CD8-positive, alpha-beta T cell (primary cell): ENCODE measurements at regions of chr7 and their contacts with region 1.

Region 1: DNA sequence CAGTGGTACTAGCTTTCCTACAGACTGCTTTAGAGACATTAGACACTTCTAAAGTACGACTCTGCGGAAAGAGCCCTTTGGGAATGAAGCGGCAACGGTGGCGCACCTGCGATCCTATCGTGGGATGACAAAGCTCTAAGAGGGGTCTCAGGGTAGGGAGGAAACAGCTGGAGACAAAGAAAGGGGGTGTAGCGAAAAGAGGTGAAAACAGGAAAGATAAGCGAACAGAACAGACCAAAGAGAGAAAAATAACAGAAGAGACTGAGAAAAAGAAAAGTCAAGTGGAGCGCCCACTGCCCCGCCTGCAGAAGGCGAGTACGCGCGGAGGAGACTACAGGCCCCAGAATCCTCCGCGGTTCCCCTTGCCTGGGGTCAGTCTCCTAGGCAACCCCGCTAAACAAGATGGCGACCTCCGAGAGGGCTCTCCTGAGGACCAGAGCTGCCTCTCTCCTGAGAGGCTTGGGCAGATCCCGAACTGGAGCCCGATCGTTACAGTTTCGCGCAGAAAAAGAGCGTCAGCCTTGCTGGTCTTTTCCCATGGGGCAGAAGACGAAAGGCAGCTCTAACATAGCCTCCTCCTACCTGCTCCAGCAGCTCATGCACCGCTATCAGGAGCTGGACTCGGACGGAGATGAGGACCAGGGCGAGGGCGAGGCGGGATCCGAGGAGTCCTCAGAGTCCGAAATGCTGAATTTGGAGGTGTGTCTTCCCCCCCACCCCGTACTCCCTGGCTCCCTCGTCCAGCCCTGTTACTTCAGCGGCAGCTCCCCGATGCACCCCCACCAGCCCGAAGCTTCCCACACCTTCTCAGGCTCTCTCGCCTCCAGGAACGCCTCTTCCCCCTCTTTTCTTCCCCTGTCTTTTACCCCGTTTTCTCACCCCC is at the start of gene LRGUK:
- DNase-seq: peak; percentile 59 to 88 (median 79)
- ATAC-seq: peak; percentile 100
- H3K4me3 ChIP-seq: peak within 1 kb of the TSS; percentile 61 to 76
- H3K4me3 Mint-ChIP-seq: peak within 1 kb of the TSS; percentile 85
- H3K27ac ChIP-seq: no peak within 1 kb of the TSS
- H3K27ac Mint-ChIP-seq: no peak within 1 kb of the TSS
- H3K4me1 ChIP-seq: peaks cover 10% of the 10 kb centered on the region
- H3K4me1 Mint-ChIP-seq: peaks cover 15% of the 10 kb centered on the region
- H3K27me3 ChIP-seq: peaks cover 0 to 4% of the 10 kb centered on the region in 2 experiments
- H3K27me3 Mint-ChIP-seq: peaks cover 18% of the 10 kb centered on the region
- CTCF ChIP-seq: no peak
- total RNA-seq, gene LRGUK: 0.42 to 0.71 TPM

Region 2: GRCh38 chr7:133081599-133082389 is 1045.4 kb before region 1 on chr7 and contains the start of gene CHCHD3:
- CTCF ChIA-PET with region 1: no interaction called
- POLR2A ChIA-PET with region 1: no interaction called
- intact Hi-C with region 1: loop called in 1 of 2 experiments (anchors 1 kb)
- DNase-seq: peak; percentile 88 to 98 (median 96)
- ATAC-seq: peak; percentile 98
- H3K4me3 ChIP-seq: peak within 1 kb of the TSS; percentile 94 to 96
- H3K4me3 Mint-ChIP-seq: peak within 1 kb of the TSS; percentile 92
- H3K27ac ChIP-seq: peak within 1 kb of the TSS; percentile 92 to 94
- H3K27ac Mint-ChIP-seq: peak within 1 kb of the TSS; percentile 96
- H3K4me1 ChIP-seq: peaks cover 16% of the 10 kb centered on the region
- H3K4me1 Mint-ChIP-seq: peaks cover 33% of the 10 kb centered on the region
- H3K27me3 ChIP-seq: no peaks in the 10 kb centered on the region
- H3K27me3 Mint-ChIP-seq: peaks cover 3% of the 10 kb centered on the region
- CTCF ChIP-seq: no peak
- total RNA-seq, gene CHCHD3: 19.0 to 20.4 TPM

Region 3: GRCh38 chr7:133252858-133253518 is 874.2 kb before region 1 on chr7 and contains the start of gene EXOC4:
- CTCF ChIA-PET with region 1: no interaction called
- POLR2A ChIA-PET with region 1: no interaction called
- intact Hi-C with region 1: loop called in 1 of 2 experiments (anchors 5 kb)
- DNase-seq: peak; percentile 82 to 98 (median 89)
- ATAC-seq: peak; percentile 99
- H3K4me3 ChIP-seq: peak within 1 kb of the TSS; percentile 88
- H3K4me3 Mint-ChIP-seq: peak within 1 kb of the TSS; percentile 96
- H3K27ac ChIP-seq: peak within 1 kb of the TSS; percentile 83 to 92
- H3K27ac Mint-ChIP-seq: peak within 1 kb of the TSS; percentile 96
- H3K4me1 ChIP-seq: peaks cover 15% of the 10 kb centered on the region
- H3K4me1 Mint-ChIP-seq: peaks cover 44% of the 10 kb centered on the region
- H3K27me3 ChIP-seq: no peaks in the 10 kb centered on the region
- H3K27me3 Mint-ChIP-seq: no peaks in the 10 kb centered on the region
- CTCF ChIP-seq: no peak
- total RNA-seq, gene EXOC4: 47.9 to 50.5 TPM

Region 4: GRCh38 chr7:133770863-133771492 is 356.2 kb before region 1 on chr7:
- CTCF ChIA-PET with region 1: no interaction called
- POLR2A ChIA-PET with region 1: no interaction called
- intact Hi-C with region 1: no loop called
- DNase-seq: no peak
- ATAC-seq: no peak
- H3K4me3 ChIP-seq: no peak overlapping the region
- H3K4me3 Mint-ChIP-seq: no peak overlapping the region
- H3K27ac ChIP-seq: no peak overlapping the region
- H3K27ac Mint-ChIP-seq: no peak overlapping the region
- H3K4me1 ChIP-seq: no peaks in the 10 kb centered on the region
- H3K4me1 Mint-ChIP-seq: no peaks in the 10 kb centered on the region
- H3K27me3 ChIP-seq: no peaks in the 10 kb centered on the region
- H3K27me3 Mint-ChIP-seq: no peaks in the 10 kb centered on the region
- CTCF ChIP-seq: no peak

Region 5: DNA sequence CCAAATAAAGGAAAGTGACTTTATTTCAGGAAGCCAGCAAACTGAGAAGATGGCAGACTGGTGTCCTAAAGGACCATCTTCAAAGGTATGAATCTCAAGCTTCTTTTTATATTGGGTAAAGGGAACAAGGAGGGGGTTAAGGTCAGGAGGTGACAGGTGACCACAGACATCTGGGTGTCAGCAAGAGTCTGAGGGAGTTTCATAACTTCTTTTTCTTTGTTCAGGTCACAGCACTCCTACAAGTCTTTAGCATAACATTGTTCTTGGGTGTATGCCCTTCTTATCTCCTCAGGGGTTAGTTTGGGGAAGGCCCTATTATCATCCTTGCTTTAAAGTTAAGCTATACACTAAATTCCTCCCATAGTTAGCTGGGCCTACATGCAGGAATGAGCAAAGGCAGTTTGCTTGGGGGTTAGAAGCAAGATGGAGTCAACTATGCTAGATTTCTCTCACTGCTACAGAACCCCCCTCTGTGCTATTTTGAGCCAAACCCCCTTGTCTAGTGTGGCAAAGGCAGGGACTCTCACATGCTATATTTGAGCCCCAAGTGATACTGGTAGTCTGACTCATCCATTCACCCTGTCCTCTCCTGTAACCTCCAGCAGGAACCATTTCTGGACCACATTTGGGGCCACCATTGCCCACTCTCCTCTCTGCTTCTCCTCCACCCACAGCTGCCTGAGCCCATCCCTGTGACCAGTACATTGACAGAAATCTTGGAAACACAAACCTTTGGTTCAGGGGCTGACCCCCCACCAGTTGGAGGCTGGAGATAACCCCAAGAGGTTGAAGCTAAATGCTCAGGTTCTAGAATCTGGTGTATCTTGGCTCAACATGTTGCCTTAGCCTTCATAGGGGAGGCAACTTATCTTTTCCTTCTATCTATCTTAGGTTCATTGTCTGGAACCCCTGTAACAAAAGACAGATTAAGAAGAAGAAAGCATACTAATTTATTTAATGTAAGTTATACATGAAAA is 55.6 kb before region 1 on chr7:
- CTCF ChIA-PET with region 1: no interaction called
- POLR2A ChIA-PET with region 1: no interaction called
- intact Hi-C with region 1: no loop called
- DNase-seq: no peak
- ATAC-seq: no peak
- H3K4me3 ChIP-seq: no peak overlapping the region
- H3K4me3 Mint-ChIP-seq: no peak overlapping the region
- H3K27ac ChIP-seq: no peak overlapping the region
- H3K27ac Mint-ChIP-seq: no peak overlapping the region
- H3K4me1 ChIP-seq: no peaks in the 10 kb centered on the region
- H3K4me1 Mint-ChIP-seq: no peaks in the 10 kb centered on the region
- H3K27me3 ChIP-seq: no peaks in the 10 kb centered on the region
- H3K27me3 Mint-ChIP-seq: no peaks in the 10 kb centered on the region
- CTCF ChIP-seq: no peak

Region 6: DNA sequence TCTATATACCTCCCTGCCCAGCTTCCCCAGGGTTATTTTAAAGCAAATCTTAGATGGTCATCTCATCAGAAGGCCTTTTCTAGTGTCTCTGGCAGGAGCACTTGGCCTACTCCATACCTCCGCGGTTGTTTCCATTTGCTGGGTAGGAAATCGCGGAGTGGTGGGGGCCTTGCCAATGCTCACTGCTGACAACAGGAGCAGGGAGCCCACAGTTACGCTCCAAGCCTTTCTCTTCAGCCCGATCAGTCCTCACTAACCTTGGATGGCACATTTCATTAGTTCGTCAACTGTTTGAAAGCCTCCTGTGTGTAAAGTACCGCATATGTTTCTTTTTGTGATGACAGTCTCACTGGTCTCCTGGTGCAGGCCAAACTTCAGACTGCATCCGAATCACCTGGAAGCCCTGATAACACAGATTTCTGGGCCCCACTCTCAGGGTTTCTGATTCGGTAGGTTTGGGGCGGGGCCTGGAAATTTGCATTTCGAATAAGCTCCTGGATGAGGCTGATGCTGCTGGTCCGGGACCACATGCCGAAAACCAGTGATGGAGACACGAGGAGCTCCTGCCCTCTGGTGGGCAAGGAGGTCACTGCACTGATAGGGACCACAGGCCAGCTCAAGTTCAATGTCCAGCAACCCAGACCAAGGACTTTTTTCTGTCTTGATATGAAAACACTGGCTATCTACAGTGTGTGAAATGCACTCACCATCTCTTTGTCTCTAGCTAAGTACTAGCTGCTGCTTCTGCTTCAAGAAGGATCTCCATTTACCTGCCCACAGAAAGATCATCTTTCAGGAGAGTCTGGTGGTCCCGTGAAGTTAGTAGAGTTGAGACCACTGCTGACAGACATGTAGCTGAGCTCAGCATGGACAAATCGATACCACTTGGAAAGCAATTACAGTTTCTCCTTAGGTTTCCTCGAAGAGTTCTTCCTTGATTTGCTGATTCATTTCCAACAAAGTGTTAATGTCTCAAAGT is 14.0 kb after region 1 on chr7:
- CTCF ChIA-PET with region 1: interaction called, 26 read pairs
- POLR2A ChIA-PET with region 1: interaction called, 3 read pairs
- intact Hi-C with region 1: no loop called
- DNase-seq: peak; percentile 6 to 57 (median 42)
- ATAC-seq: peak; percentile 69
- H3K4me3 ChIP-seq: no peak overlapping the region
- H3K4me3 Mint-ChIP-seq: no peak overlapping the region
- H3K27ac ChIP-seq: no peak overlapping the region
- H3K27ac Mint-ChIP-seq: no peak overlapping the region
- H3K4me1 ChIP-seq: no peaks in the 10 kb centered on the region
- H3K4me1 Mint-ChIP-seq: peaks cover 6% of the 10 kb centered on the region
- H3K27me3 ChIP-seq: no peaks in the 10 kb centered on the region
- H3K27me3 Mint-ChIP-seq: no peaks in the 10 kb centered on the region
- CTCF ChIP-seq: peak; percentile 68

Region 7: GRCh38 chr7:135558337-135558767 is 1431.1 kb after region 1 on chr7:
- CTCF ChIA-PET with region 1: no interaction called
- POLR2A ChIA-PET with region 1: no interaction called
- intact Hi-C with region 1: loop called in 1 of 2 experiments (anchors 5 kb)
- DNase-seq: peak; percentile 37 to 87 (median 68)
- ATAC-seq: peak; percentile 52
- H3K4me3 ChIP-seq: peak overlapping the region; percentile 85 to 86
- H3K4me3 Mint-ChIP-seq: no peak overlapping the region
- H3K27ac ChIP-seq: peak overlapping the region; percentile 90 to 98
- H3K27ac Mint-ChIP-seq: no peak overlapping the region
- H3K4me1 ChIP-seq: peaks cover 16% of the 10 kb centered on the region
- H3K4me1 Mint-ChIP-seq: peaks cover 17% of the 10 kb centered on the region
- H3K27me3 ChIP-seq: no peaks in the 10 kb centered on the region
- H3K27me3 Mint-ChIP-seq: no peaks in the 10 kb centered on the region
- CTCF ChIP-seq: peak; percentile 52

Region 8: DNA sequence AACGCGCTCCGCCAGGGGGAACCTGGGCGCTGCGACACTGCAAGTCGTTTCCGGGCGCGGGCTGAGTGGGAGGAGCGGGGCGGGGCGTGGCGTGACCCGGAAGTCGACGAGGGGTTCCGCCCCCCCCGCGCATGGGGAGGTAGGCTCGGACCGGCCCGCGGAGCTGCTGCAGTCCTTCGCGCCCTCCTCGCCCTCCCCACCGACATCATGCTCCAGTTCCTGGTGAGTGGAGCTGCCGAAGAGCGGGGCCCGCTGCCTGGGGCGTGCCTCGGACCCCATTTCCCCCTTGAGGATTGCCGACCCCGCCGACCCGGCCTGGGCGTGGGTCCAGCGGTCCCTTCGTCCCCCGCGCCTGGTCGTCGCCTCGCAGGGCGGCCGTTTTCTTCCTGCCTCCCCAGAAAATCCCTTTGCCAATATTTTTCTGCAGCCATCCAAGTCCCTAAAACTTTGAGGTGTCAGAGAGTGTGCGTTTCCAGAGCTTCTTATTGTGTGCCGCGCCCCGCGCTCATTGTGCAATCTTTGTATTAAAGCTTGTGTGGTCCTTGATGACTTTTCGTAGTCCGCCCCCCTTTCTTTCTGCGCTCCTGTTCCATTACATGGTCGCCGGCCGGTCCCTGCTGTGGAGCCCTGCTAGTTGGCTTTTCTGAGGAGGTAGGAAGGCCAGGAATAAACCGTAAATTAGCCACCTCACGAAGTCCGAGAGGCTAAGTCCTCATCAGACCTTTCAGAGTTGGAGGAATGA is 1535.3 kb after region 1 on chr7 and contains the start of gene STMP1:
- CTCF ChIA-PET with region 1: no interaction called
- POLR2A ChIA-PET with region 1: no interaction called
- intact Hi-C with region 1: loop called (anchors 5 to 10 kb)
- DNase-seq: peak; percentile 91 to 99 (median 96)
- ATAC-seq: peak; percentile 99
- H3K4me3 ChIP-seq: peak within 1 kb of the TSS; percentile 72 to 76
- H3K4me3 Mint-ChIP-seq: peak within 1 kb of the TSS; percentile 90
- H3K27ac ChIP-seq: peak within 1 kb of the TSS; percentile 53 to 65
- H3K27ac Mint-ChIP-seq: peak within 1 kb of the TSS; percentile 88
- H3K4me1 ChIP-seq: peaks cover 20% of the 10 kb centered on the region
- H3K4me1 Mint-ChIP-seq: peaks cover 41% of the 10 kb centered on the region
- H3K27me3 ChIP-seq: no peaks in the 10 kb centered on the region
- H3K27me3 Mint-ChIP-seq: no peaks in the 10 kb centered on the region
- CTCF ChIP-seq: peak; percentile 64
- total RNA-seq, gene STMP1: 9.4 to 11.5 TPM

Region 9: GRCh38 chr7:135977007-135977741 is 1850.0 kb after region 1 on chr7 and contains the start of gene MTPN:
- CTCF ChIA-PET with region 1: no interaction called
- POLR2A ChIA-PET with region 1: no interaction called
- intact Hi-C with region 1: loop called in 1 of 2 experiments (anchors 10 kb)
- DNase-seq: peak; percentile 94 to 98 (median 98)
- ATAC-seq: peak; percentile 81
- H3K4me3 ChIP-seq: peak within 1 kb of the TSS; percentile 89 to 93
- H3K4me3 Mint-ChIP-seq: peak within 1 kb of the TSS; percentile 92
- H3K27ac ChIP-seq: peak within 1 kb of the TSS; percentile 82 to 88
- H3K27ac Mint-ChIP-seq: peak within 1 kb of the TSS; percentile 93
- H3K4me1 ChIP-seq: peaks cover 71% of the 10 kb centered on the region
- H3K4me1 Mint-ChIP-seq: peaks cover 79% of the 10 kb centered on the region
- H3K27me3 ChIP-seq: no peaks in the 10 kb centered on the region
- H3K27me3 Mint-ChIP-seq: no peaks in the 10 kb centered on the region
- CTCF ChIP-seq: no peak
- total RNA-seq, gene MTPN: 91.9 to 101 TPM